Activated CD4-positive, alpha-beta memory T cell treated with anti-CD3 and anti-CD28 coated beads for 36 hours (primary cell): ENCODE measurements at regions of chr14 and their contacts with region 1.

Region 1: GRCh38 chr14:52299692-52300278 is 14.3 kb upstream of the PTGER2 start:
- DNase-seq: no peak
- H3K4me3 Mint-ChIP-seq: no peak overlapping the region
- H3K27ac Mint-ChIP-seq: no peak overlapping the region
- H3K4me1 Mint-ChIP-seq: peaks cover 34% of the 10 kb centered on the region
- H3K27me3 Mint-ChIP-seq: no peaks in the 10 kb centered on the region

Region 2: GRCh38 chr14:52124791-52125661 is 174.8 kb before region 1 on chr14:
- CTCF ChIA-PET with region 1: no interaction called
- POLR2A ChIA-PET with region 1: no interaction called
- intact Hi-C with region 1: no loop called
- DNase-seq: no peak
- H3K4me3 Mint-ChIP-seq: no peak overlapping the region
- H3K27ac Mint-ChIP-seq: no peak overlapping the region
- H3K4me1 Mint-ChIP-seq: peaks cover 14% of the 10 kb centered on the region
- H3K27me3 Mint-ChIP-seq: peaks cover 4% of the 10 kb centered on the region

Region 3: GRCh38 chr14:52313903-52314594 is 14.3 kb after region 1 on chr14 and contains the start of gene PTGER2:
- CTCF ChIA-PET with region 1: interaction called, 28 read pairs
- POLR2A ChIA-PET with region 1: interaction called, 6 read pairs
- intact Hi-C with region 1: no loop called
- DNase-seq: peak; percentile 90
- H3K4me3 Mint-ChIP-seq: peak within 1 kb of the TSS; percentile 97
- H3K27ac Mint-ChIP-seq: peak within 1 kb of the TSS; percentile 90
- H3K4me1 Mint-ChIP-seq: peaks cover 69% of the 10 kb centered on the region
- H3K27me3 Mint-ChIP-seq: peaks cover 6% of the 10 kb centered on the region
- total RNA-seq, gene PTGER2: 10.7 to 12.9 TPM

Region 4: GRCh38 chr14:52391881-52392615 is 92.3 kb after region 1 on chr14:
- CTCF ChIA-PET with region 1: no interaction called
- POLR2A ChIA-PET with region 1: no interaction called
- intact Hi-C with region 1: no loop called
- DNase-seq: no peak
- H3K4me3 Mint-ChIP-seq: no peak overlapping the region
- H3K27ac Mint-ChIP-seq: no peak overlapping the region
- H3K4me1 Mint-ChIP-seq: peaks cover 2% of the 10 kb centered on the region
- H3K27me3 Mint-ChIP-seq: no peaks in the 10 kb centered on the region

Region 5: GRCh38 chr14:52413729-52414408 is 114.1 kb after region 1 on chr14:
- CTCF ChIA-PET with region 1: interaction called, 6 read pairs
- POLR2A ChIA-PET with region 1: no interaction called
- intact Hi-C with region 1: loop called (anchors 1 kb)
- DNase-seq: no peak
- H3K4me3 Mint-ChIP-seq: peak overlapping the region; percentile 4
- H3K27ac Mint-ChIP-seq: peak overlapping the region; percentile 69
- H3K4me1 Mint-ChIP-seq: peaks cover 49% of the 10 kb centered on the region
- H3K27me3 Mint-ChIP-seq: no peaks in the 10 kb centered on the region

Region 6: DNA sequence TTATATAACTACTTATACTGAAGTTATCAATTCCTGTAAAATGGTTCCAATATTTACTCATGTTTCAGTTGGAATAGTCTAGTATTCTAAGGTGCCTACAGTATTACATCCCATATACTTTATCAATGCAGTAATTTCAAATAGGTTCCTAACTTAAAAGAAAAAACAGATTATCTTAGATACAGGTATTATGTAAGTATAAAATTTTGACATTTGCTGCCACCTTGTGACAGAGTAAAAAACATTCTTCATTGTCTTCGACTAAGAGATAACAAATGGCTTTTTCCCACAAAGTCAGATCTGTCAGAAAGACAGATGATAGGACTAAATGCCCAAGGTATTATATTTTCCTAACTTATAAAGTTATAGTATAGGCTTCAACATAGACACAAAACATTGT is 173.8 kb after region 1 on chr14:
- CTCF ChIA-PET with region 1: interaction called, 22 read pairs
- POLR2A ChIA-PET with region 1: no interaction called
- intact Hi-C with region 1: loop called (anchors 1 kb)
- DNase-seq: no peak
- H3K4me3 Mint-ChIP-seq: no peak overlapping the region
- H3K27ac Mint-ChIP-seq: no peak overlapping the region
- H3K4me1 Mint-ChIP-seq: peaks cover 4% of the 10 kb centered on the region
- H3K27me3 Mint-ChIP-seq: no peaks in the 10 kb centered on the region